HCT116 (cell line): ENCODE measurements at regions of chr2 and their contacts with region 1.

Region 1: DNA sequence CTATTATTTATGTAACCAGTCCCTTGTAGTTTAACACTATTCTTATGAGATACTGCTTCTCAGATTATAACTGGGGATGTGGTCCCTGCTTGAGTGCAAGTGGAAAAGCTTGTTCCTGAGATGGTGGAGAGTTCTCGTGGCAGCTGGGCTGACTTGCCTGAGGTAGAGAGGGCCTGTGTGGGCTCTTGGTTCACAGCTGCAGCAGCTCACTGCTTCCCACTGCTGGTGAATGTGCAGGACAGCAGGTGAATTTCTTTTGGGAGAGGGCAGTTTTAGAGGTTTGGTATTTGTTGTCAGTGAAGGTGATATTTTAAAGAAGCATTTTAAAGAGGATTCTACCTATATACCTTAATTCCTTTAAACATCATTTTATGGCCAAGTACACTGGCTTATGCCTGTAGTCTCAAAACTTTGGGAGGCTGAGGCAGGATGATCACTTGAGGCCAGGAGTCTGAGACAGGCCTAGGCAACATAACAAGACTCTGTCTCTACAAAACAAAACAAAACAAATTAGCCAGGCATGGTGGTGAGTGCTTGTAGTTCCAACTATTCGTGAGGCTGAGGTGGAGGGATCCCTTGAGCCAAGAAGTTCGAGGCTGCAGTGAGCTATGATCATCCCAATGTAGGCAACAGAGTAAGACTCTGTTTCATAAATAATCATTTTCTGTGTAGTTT is 94.8 kb downstream of the MTA3 start:
- DNase-seq: peak; percentile 46
- ATAC-seq: peak; percentile 97
- H3K4me3 ChIP-seq: no peak overlapping the region
- H3K27ac ChIP-seq: no peak overlapping the region
- H3K4me1 ChIP-seq: no peaks in the 10 kb centered on the region
- H3K27me3 ChIP-seq: no peaks in the 10 kb centered on the region
- CTCF ChIP-seq: peak; percentile 90 to 99 (median 98)
- POLR2A ChIP-seq: no peak
- RAD21 ChIP-seq: peak; percentile 92

Region 2: GRCh38 chr2:42513257-42513918 is 149.9 kb before region 1 on chr2:
- CTCF ChIA-PET with region 1: interaction called, 4 read pairs
- POLR2A ChIA-PET with region 1: no interaction called
- RAD21 ChIA-PET with region 1: no interaction called
- intact Hi-C with region 1: loop called (anchors 5 kb)
- DNase-seq: peak; percentile 57
- ATAC-seq: peak; percentile 90
- H3K4me3 ChIP-seq: no peak overlapping the region
- H3K27ac ChIP-seq: no peak overlapping the region
- H3K4me1 ChIP-seq: no peaks in the 10 kb centered on the region
- H3K27me3 ChIP-seq: no peaks in the 10 kb centered on the region
- CTCF ChIP-seq: peak; percentile 69 to 77 (median 76)
- POLR2A ChIP-seq: no peak
- RAD21 ChIP-seq: peak; percentile 74

Region 3: GRCh38 chr2:42828487-42829425 is 165.5 kb after region 1 on chr2:
- CTCF ChIA-PET with region 1: no interaction called
- POLR2A ChIA-PET with region 1: no interaction called
- RAD21 ChIA-PET with region 1: no interaction called
- intact Hi-C with region 1: no loop called
- DNase-seq: peak; percentile 54
- ATAC-seq: peak; percentile 86
- H3K4me3 ChIP-seq: no peak overlapping the region
- H3K27ac ChIP-seq: no peak overlapping the region
- H3K4me1 ChIP-seq: peaks cover 0 to 12% of the 10 kb centered on the region in 2 experiments; a peak in 1 of 4 replicates
- H3K27me3 ChIP-seq: no peaks in the 10 kb centered on the region
- CTCF ChIP-seq: peak; percentile 75 to 92 (median 90)
- POLR2A ChIP-seq: no peak
- RAD21 ChIP-seq: peak; percentile 82